ENCODE measurements at regions of chr12 and their contacts with region 1.

Region 1: DNA sequence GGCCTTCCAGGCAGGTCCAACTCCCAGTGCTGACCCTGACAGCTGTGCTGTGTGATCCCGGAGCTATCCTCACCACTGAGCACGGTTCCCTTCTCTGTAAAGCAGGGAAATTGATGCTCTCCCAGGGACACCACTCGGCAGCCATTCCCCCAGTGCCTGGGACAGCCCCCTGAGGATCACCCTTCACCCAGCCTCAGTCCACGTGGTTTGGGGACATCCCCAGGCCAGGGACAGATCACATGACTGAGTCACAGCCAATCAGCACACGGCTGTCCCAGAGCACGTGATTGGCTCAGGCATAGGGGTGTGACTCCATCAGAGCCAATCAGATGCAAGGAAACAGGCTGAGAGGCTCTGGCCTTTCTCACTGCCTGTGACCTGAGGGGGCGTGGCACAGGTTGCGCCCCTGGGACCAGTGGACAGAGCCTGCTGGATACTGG is 68.8 kb upstream of the SFSWAP start:
- DNase-seq: no peak
- ATAC-seq: peak; percentile 61
- H3K4me3 ChIP-seq: no peak overlapping the region
- H3K27ac ChIP-seq: no peak overlapping the region
- H3K4me1 ChIP-seq: no peaks in the 10 kb centered on the region
- H3K27me3 ChIP-seq: no peaks in the 10 kb centered on the region; the same call in 1 of the 2 replicates
- CTCF ChIP-seq: no peak

Region 2: DNA sequence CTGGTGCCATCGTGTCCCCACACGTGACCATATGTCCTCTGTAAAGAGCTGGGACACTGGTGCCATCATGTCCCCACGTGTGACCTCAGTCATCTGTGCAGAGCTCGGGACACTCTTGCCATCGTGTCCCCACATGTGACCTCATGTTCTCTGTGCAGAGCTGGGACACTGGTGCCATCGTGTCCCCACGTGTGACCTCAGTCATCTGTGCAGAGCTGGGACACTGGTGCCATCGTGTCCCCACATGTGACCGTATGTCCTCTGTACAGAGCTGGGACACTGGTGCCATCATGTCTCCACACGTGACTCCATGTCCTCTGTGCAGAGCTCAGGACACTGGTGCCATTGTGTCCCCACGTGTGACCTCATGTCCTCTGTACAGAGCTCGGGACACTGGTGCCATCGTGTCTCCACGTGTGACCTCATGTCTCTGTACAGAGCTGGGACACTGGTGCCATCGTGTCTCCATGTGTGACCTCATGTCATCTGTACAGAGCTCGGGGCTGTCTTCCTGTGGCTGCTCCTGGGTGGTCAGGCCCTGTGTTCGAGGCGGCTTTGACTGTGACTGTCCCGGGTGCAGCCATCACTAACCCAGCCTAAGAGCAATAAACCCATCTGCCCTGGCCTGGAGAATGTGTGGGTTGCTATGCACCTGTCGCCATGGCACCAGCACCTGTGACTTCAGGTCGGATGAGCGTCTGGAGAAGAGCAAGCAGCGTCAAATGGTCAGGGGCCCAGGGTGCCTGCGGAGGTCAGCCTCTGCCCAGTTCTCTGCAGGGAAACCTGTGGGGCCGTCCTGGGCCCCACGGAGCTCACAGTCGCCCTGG is 354.0 kb before region 1 on chr12:
- CTCF ChIA-PET with region 1: no interaction called
- POLR2A ChIA-PET with region 1: no interaction called
- in situ Hi-C with region 1: no loop called
- intact Hi-C with region 1: no loop called
- DNase-seq: no peak
- ATAC-seq: no peak
- H3K4me3 ChIP-seq: no peak overlapping the region
- H3K27ac ChIP-seq: no peak overlapping the region
- H3K4me1 ChIP-seq: no peaks in the 10 kb centered on the region
- H3K27me3 ChIP-seq: no peaks in the 10 kb centered on the region; the same call in 1 of the 2 replicates
- CTCF ChIP-seq: no peak

Region 3: DNA sequence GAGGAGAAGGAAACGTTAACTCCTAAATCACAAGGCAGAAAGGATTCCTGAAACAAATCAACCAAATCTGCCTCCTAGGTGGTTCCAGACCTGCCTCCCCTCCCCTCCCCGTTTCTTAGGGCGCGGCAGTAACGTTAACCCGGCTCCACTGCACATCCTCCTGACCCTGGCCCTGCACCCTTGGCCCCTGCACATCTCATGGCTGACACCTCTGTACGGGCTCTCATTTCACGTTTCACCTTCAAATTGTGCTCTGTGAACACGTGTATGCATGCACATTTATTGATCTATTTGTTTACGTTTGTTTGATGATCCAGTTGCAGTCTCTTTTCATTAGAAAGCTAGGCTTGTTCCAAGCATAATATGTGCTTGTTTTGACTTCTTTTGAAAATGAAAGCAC is 330.4 kb before region 1 on chr12:
- CTCF ChIA-PET with region 1: no interaction called
- POLR2A ChIA-PET with region 1: no interaction called
- in situ Hi-C with region 1: no loop called
- intact Hi-C with region 1: loop called (anchors 5 kb)
- DNase-seq: no peak
- ATAC-seq: no peak; the same call in 1 of the 2 replicates
- H3K4me3 ChIP-seq: no peak overlapping the region
- H3K27ac ChIP-seq: no peak overlapping the region
- H3K4me1 ChIP-seq: no peaks in the 10 kb centered on the region
- H3K27me3 ChIP-seq: no peaks in the 10 kb centered on the region
- CTCF ChIP-seq: no peak

Region 4: DNA sequence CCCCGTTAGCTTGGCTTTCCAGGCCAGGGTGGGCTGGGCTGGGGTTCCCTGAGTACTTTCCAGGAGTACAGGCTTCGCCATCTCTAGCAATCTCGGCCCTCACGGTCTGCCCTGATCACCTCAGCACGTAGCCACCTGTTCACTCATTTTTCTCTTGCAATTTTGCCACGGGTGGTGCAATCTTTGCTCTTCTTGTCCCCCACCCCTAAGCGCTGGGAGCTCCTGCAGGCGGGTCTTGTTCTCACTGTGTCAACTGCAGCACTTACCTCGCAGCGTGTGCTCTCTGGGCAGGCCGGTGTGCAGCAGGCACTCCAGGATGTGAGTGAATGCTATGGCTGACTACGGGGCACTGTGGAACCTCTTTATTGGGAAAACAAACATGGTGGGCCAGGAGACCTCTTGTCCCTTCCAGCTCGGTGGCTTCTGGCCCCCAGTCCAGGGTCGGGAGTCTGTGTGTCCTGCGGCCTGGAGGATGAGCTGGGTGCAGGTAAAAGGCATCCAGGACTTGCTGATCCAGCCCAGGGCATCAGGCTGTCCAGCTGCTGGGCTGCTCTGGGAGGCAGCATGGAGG is 250.7 kb after region 1 on chr12:
- CTCF ChIA-PET with region 1: no interaction called
- POLR2A ChIA-PET with region 1: no interaction called
- in situ Hi-C with region 1: no loop called
- intact Hi-C with region 1: no loop called
- DNase-seq: no peak
- ATAC-seq: no peak
- H3K4me3 ChIP-seq: no peak overlapping the region
- H3K27ac ChIP-seq: no peak overlapping the region
- H3K4me1 ChIP-seq: 0 out of 2 replicates have a peak, but pooled peaks cover 4% of the 10 kb centered on the region
- H3K27me3 ChIP-seq: no peaks in the 10 kb centered on the region
- CTCF ChIP-seq: no peak

Measured in Panc1 (cell line).